ENCODE measurements at regions of chr6 and their contacts with region 1.

Region 1: GRCh38 chr6:125779924-125780539 is 10.7 kb upstream of the NCOA7 start:
- DNase-seq: peak; percentile 94
- H3K4me3 Mint-ChIP-seq: no peak overlapping the region
- H3K27ac Mint-ChIP-seq: no peak overlapping the region
- H3K4me1 Mint-ChIP-seq: peaks cover 14% of the 10 kb centered on the region
- H3K27me3 Mint-ChIP-seq: peaks cover 14% of the 10 kb centered on the region
- CTCF ChIP-seq: no peak

Region 2: DNA sequence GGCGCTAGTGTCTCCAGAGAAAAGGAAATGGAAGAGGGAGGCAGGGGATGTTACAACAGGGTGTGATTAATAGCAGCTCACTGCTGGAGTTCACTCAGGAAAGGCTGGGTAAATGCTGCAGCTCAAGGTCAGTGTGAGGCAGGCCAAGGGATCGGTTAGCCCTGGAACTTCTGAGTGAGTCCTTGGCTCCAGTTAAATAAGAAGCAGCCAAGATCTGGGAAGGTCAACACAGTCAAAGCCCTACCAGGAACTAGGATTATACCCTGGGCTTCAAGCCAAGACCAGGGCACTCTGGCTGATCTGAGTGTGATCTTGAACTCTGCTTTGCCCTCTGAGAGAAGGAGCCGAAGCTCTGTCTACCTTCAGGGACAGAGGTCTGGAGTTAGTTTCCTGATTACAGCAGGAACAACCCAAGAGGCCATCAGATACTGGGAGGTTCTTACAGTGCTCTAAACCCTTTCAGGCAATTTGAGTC is 582.2 kb before region 1 on chr6:
- CTCF ChIA-PET with region 1: no interaction called
- POLR2A ChIA-PET with region 1: interaction called, 11 read pairs
- intact Hi-C with region 1: no loop called
- DNase-seq: peak; percentile 98
- H3K4me3 Mint-ChIP-seq: no peak overlapping the region
- H3K27ac Mint-ChIP-seq: peak overlapping the region; percentile 82
- H3K4me1 Mint-ChIP-seq: peaks cover 62% of the 10 kb centered on the region
- H3K27me3 Mint-ChIP-seq: no peaks in the 10 kb centered on the region
- CTCF ChIP-seq: no peak

Region 3: DNA sequence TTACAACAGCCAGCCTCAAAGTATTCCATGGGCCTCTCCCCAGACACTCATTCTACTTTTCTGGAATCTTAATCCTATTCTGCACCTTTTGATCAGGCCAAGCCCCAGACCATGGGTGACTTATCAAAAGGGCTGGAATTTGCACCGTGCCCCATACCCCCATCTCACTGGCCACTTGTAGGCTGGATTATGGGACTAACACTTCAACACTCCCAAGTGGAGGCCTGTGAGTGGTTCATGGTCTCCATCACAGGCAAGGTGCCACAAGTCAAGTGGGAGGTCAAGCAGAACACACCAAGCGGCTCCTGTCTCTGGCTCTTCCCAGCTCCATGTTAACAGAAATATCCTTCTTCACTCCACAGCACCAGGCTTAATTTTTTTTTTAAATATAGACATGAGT is 242.9 kb before region 1 on chr6:
- CTCF ChIA-PET with region 1: no interaction called
- POLR2A ChIA-PET with region 1: no interaction called
- intact Hi-C with region 1: no loop called
- DNase-seq: no peak
- H3K4me3 Mint-ChIP-seq: no peak overlapping the region
- H3K27ac Mint-ChIP-seq: no peak overlapping the region
- H3K4me1 Mint-ChIP-seq: no peaks in the 10 kb centered on the region
- H3K27me3 Mint-ChIP-seq: peaks cover 100% of the 10 kb centered on the region
- CTCF ChIP-seq: no peak

Region 4: DNA sequence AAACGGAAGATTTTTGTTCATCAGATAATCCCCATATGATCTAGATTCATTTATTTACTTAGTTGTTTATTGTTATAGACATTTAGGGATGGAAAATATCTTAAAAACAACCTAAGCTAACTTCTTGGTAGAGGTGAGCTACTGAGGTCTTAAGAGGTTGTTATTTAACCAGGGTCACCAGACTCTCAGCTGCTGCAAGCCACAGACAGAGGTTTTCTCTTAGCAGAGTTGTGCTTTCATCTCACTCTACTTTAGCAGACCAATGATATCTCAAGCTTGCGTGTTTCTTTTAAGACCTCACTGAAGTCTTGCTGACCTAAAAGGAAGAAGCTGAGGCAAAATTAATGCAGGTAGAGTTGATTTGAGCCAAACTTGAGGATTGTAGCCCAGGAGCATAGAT is 54.3 kb after region 1 on chr6:
- CTCF ChIA-PET with region 1: interaction called, 3 read pairs
- POLR2A ChIA-PET with region 1: interaction called, 11 read pairs
- intact Hi-C with region 1: no loop called
- DNase-seq: no peak
- H3K4me3 Mint-ChIP-seq: no peak overlapping the region
- H3K27ac Mint-ChIP-seq: no peak overlapping the region
- H3K4me1 Mint-ChIP-seq: peaks cover 26% of the 10 kb centered on the region
- H3K27me3 Mint-ChIP-seq: no peaks in the 10 kb centered on the region
- CTCF ChIP-seq: no peak

Region 5: DNA sequence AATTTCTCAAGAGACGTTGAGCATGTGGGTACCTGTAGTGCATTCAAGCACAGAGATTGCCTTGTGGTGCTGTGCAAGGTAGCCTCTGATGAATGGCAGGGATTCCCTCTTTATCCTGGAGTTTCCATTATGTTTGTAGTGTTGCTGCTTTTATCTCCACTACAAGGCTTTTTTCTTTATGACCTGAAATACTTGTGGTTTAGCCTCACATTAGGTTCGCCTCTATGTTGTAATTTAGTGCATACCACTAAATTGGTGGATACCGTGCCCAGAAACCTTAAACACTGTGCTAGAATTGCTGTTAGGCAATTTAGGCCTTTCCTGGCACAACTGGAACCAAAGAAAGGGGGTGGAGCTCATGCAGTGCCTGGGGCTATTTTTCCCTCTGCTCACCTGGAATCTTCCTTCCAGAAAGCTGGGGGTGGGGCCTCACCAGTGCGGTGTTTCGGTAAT is 87.5 kb after region 1 on chr6:
- CTCF ChIA-PET with region 1: interaction called, 3 read pairs
- POLR2A ChIA-PET with region 1: interaction called, 24 read pairs
- intact Hi-C with region 1: no loop called
- DNase-seq: peak; percentile 99
- H3K4me3 Mint-ChIP-seq: peak overlapping the region; percentile 39
- H3K27ac Mint-ChIP-seq: peak overlapping the region; percentile 87
- H3K4me1 Mint-ChIP-seq: peaks cover 57% of the 10 kb centered on the region
- H3K27me3 Mint-ChIP-seq: no peaks in the 10 kb centered on the region
- CTCF ChIP-seq: no peak

Region 6: DNA sequence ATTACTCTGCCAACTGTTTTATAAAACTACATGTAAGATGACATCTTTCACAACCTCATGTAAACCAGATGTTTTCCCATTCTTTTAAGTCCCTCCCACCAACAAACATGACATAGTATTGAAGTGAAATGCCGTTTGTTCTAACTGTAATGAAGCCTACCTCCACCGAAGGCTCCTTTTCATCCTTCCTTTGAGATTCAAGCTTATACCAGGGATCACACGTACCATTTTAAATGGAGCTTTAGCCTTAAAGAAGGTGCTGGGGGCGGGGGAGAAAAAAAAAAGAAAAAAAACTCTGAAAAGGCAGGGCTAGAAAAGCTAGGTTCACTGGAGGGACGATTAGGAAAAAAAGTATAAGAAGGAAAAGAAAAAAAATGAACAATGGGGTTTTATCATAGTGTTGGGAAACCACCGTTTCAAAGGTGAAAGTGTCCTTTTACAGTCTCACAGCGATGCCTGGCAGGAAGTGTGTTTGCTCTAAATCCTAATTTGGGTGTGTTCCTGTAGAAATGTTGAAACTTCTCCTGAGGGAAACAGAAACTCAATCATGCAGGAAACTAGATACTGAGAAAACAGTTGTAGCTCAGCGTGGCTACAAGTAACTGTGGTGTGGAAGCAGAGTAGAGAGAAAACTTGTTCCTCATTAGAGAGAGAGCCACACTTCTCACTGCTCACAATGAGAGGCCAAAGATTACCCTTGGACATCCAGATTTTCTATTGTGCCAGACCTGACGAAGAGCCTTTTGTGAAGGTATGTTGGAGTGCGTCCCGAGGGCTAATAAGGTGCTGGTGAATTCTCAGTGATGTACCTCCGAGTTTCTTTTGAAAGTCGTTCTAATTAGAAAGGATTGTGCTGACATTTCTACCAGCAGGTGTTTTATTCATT is 138.9 kb after region 1 on chr6:
- CTCF ChIA-PET with region 1: interaction called, 4 read pairs
- POLR2A ChIA-PET with region 1: interaction called, 17 read pairs
- intact Hi-C with region 1: no loop called
- DNase-seq: peak; percentile 97
- H3K4me3 Mint-ChIP-seq: peak overlapping the region; percentile 90
- H3K27ac Mint-ChIP-seq: peak overlapping the region; percentile 99
- H3K4me1 Mint-ChIP-seq: peaks cover 47% of the 10 kb centered on the region
- H3K27me3 Mint-ChIP-seq: no peaks in the 10 kb centered on the region
- CTCF ChIP-seq: no peak

Region 7: DNA sequence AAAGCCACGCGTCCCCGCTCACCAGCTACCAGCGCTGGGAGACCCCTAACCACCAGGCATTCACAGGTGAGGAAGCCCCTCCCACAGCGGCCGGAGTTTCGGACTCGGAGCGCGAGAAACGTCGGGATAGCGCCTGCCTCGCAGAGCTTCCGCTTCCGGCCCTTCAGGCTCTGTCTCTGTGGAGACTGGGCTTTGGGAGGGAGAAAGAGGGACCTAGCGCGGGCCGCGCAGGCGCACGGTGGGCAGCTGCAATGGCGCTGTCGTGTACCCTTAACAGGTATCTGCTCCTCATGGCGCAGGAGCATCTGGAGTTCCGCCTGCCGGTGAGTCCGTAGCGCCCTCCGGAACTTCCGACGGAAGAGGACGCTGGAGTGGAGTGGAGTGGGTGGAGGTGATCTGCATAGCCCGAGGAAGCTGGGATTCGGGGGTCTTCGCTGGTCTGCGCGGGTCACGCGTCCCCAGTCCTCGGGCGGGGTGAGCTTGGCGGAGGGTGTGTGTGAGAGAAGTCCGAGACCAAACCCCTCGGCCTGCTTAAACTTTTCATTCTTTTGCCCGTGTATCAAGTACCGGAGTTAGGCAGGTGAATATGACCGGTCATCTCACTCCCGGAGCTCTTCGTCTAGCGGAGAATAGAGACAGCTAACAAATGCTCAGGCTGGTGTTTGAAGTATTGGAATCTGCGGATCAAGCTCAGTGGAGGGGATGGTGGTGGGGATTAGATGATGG is 206.4 kb after region 1 on chr6 and contains the start of gene TRMT11:
- CTCF ChIA-PET with region 1: no interaction called
- POLR2A ChIA-PET with region 1: interaction called, 14 read pairs
- intact Hi-C with region 1: no loop called
- DNase-seq: peak; percentile 92
- H3K4me3 Mint-ChIP-seq: no peak within 1 kb of the TSS
- H3K27ac Mint-ChIP-seq: no peak within 1 kb of the TSS
- H3K4me1 Mint-ChIP-seq: no peaks in the 10 kb centered on the region
- H3K27me3 Mint-ChIP-seq: no peaks in the 10 kb centered on the region
- CTCF ChIP-seq: no peak
- total RNA-seq, gene TRMT11: 28.8 and 32.5 TPM in 2 replicates